Vagina (tissue), 2 donors: ENCODE measurements at regions of chr10 and their contacts with region 1.

Region 1: GRCh38 chr10:29304264-29305030 is 15.6 kb downstream of the LYZL1 start:
- DNase-seq: peak in 1 of 2 donors; percentile 77
- H3K4me3 ChIP-seq: no peak overlapping the region
- H3K27ac ChIP-seq: no peak overlapping the region
- H3K4me1 ChIP-seq: no peaks in the 10 kb centered on the region
- H3K27me3 ChIP-seq: no peaks in the 10 kb centered on the region
- CTCF ChIP-seq: peak in 2 of 3 experiments; percentile 72 to 79
- POLR2A ChIP-seq: no peak

Region 2: DNA sequence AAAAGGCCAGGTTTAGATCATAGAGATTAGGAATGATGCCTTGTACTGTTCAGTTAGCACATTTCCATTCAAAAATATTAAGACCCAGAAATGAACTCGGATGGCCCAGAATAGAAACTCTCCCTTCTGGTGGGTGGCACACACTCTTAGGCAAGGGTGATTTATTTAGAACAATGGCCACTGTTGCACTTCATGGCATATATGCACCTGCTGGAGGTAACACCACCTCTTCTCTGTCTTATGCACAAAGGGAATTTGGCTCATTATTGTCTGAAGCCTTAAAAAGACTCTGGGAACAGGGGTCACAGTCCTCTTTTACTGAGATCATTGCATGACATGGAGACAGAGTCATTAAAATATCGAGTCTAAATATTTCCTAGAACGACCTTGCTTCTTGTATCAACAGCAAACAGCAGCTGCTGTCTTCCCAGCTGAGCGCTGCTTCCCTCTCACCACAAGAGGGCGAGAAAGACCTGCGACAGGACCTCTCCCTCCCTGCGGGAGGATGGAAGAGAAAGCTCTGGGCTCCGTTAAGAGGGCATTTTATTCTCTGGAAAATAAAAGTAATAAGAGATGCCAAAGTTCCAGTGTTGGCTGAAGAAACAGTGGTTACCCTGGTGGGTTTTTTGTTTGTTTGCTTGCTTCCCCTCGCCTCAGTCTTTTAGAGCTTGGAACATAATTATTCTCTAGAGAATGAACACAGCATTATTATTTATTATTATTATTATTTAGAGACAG is 640.7 kb before region 1 on chr10:
- intact Hi-C with region 1: loop called (anchors 10 kb)
- DNase-seq: peak in 1 of 2 donors; percentile 58
- H3K4me3 ChIP-seq: no peak overlapping the region
- H3K27ac ChIP-seq: no peak overlapping the region
- H3K4me1 ChIP-seq: peaks cover 6% of the 10 kb centered on the region
- H3K27me3 ChIP-seq: no peaks in the 10 kb centered on the region
- CTCF ChIP-seq: peak; percentile 87 to 97 (median 90)
- POLR2A ChIP-seq: no peak

Region 3: GRCh38 chr10:29328983-29329382 is 24.5 kb after region 1 on chr10:
- intact Hi-C with region 1: no loop called
- DNase-seq: peak in 1 of 2 donors; percentile 22
- H3K4me3 ChIP-seq: no peak overlapping the region
- H3K27ac ChIP-seq: no peak overlapping the region
- H3K4me1 ChIP-seq: no peaks in the 10 kb centered on the region
- H3K27me3 ChIP-seq: no peaks in the 10 kb centered on the region
- CTCF ChIP-seq: no peak
- POLR2A ChIP-seq: no peak

Region 4: DNA sequence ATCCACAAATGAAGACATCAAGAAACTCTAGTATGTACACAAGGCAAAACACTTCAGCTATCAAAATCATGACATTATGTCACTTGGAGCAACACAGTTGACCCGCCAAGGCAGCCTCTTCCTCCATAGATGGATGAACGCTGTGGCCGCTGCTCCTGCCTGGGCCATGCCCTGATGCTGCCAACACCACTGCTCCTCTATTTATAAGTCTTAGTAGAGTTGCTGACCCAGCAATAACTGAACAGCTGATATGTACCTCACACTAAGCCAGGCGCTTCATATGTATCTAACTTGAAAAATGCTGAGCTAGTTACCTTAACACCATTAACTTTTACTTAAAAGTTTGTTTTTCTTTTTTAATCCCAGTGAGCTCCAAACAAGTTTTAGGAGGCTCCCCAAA is 116.3 kb after region 1 on chr10:
- intact Hi-C with region 1: no loop called
- DNase-seq: no peak
- H3K4me3 ChIP-seq: no peak overlapping the region
- H3K27ac ChIP-seq: no peak overlapping the region
- H3K4me1 ChIP-seq: no peaks in the 10 kb centered on the region
- H3K27me3 ChIP-seq: no peaks in the 10 kb centered on the region
- CTCF ChIP-seq: no peak
- POLR2A ChIP-seq: no peak